ENCODE measurements at regions of chr2 and their contacts with region 1.

Region 1: GRCh38 chr2:85327822-85328617 is at the start of gene TGOLN2:
- DNase-seq: peak; percentile 93 to 96 (median 95)
- H3K4me3 ChIP-seq: peak within 1 kb of the TSS; percentile 99 to 100
- H3K4me3 Mint-ChIP-seq: peak within 1 kb of the TSS; percentile 92 to 100 (median 98)
- H3K27ac ChIP-seq: peak within 1 kb of the TSS; percentile 98
- H3K27ac Mint-ChIP-seq: peak within 1 kb of the TSS; percentile 97 to 100 (median 100)
- H3K4me1 ChIP-seq: peaks cover 44% of the 10 kb centered on the region
- H3K4me1 Mint-ChIP-seq: peaks cover 21 to 65% (median 34%) of the 10 kb centered on the region in 4 donors
- H3K27me3 ChIP-seq: no peaks in the 10 kb centered on the region
- H3K27me3 Mint-ChIP-seq: no peaks in the 10 kb centered on the region
- total RNA-seq, gene TGOLN2: 188 to 195 TPM

Region 2: DNA sequence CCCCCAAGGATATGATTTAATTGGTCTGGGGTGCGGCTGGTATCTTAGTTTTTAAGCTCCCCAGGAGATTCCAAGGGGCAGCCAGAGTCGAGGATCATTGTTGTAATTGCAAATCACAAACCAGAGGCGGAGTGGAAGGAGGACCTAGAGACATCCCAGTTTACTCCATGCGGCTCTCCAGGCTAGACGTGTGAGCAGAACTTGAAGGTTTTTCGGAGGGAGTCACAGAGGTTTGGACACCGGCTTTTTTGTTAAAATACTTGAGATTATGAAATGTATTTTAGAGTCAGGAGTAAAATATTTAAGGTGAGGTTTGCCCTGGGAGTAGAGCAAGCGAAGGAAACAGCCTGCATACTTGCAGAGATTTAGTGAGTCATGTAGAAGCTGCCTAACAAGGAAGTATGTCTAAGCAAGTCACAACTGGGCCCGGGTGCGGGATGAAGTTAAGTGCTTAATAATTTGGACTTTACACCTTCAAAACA is 39.7 kb before region 1 on chr2:
- CTCF ChIA-PET with region 1: interaction called, 4 read pairs
- POLR2A ChIA-PET with region 1: interaction called, 32 read pairs
- intact Hi-C with region 1: no loop called
- DNase-seq: no peak
- H3K4me3 ChIP-seq: no peak overlapping the region
- H3K4me3 Mint-ChIP-seq: no peak overlapping the region
- H3K27ac ChIP-seq: no peak overlapping the region
- H3K27ac Mint-ChIP-seq: no peak overlapping the region
- H3K4me1 ChIP-seq: peaks cover 10% of the 10 kb centered on the region
- H3K4me1 Mint-ChIP-seq: peaks cover 16 to 28% (median 23%) of the 10 kb centered on the region in 4 donors
- H3K27me3 ChIP-seq: no peaks in the 10 kb centered on the region
- H3K27me3 Mint-ChIP-seq: no peaks in the 10 kb centered on the region

Region 3: DNA sequence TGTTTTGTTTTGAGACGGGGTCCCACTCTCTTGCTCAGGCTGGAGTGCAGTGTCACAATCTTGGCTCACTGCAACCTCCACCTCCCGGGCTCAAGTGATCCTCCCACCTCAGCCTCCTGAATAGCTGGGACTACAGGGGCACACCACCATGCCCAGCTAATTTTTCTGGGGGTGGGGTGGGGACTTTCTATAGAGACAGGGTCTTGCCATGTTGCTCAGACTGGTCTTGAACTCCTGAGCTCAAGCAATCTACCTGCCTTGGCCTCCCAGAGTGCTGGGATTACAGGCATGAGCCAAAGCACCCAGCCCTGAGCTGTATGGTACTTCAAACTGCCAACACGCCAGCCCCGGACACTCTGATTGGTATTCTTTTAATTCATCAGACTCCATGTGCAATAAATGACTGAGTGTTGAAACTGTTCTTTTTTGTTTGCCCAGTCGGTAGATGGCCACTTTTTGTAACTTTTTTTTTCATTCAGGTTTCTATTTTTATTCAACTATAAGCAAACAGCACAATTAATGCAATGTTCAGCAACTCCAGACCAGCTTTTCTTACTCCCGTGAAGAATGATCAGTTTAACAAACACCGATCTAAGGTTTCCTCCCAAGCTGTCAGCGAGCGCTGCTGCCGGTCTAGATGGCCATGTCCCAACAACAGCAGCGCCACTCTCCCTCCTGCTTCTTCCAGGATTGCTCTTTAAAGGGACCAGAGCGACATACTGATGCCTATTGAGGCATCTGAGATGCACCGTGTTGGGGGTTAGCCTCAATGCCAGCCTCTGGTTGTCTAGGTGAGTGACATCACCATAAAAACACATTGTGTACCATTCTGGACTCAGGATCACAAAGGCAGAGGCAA is 12.2 kb after region 1 on chr2:
- CTCF ChIA-PET with region 1: interaction called, 3 read pairs
- POLR2A ChIA-PET with region 1: interaction called, 12 read pairs
- intact Hi-C with region 1: no loop called
- DNase-seq: no peak
- H3K4me3 ChIP-seq: no peak overlapping the region
- H3K4me3 Mint-ChIP-seq: no peak overlapping the region
- H3K27ac ChIP-seq: no peak overlapping the region
- H3K27ac Mint-ChIP-seq: no peak overlapping the region
- H3K4me1 ChIP-seq: no peaks in the 10 kb centered on the region
- H3K4me1 Mint-ChIP-seq: peaks cover 0 to 1% (median 0%) of the 10 kb centered on the region in 4 donors
- H3K27me3 ChIP-seq: no peaks in the 10 kb centered on the region
- H3K27me3 Mint-ChIP-seq: no peaks in the 10 kb centered on the region

Region 4: DNA sequence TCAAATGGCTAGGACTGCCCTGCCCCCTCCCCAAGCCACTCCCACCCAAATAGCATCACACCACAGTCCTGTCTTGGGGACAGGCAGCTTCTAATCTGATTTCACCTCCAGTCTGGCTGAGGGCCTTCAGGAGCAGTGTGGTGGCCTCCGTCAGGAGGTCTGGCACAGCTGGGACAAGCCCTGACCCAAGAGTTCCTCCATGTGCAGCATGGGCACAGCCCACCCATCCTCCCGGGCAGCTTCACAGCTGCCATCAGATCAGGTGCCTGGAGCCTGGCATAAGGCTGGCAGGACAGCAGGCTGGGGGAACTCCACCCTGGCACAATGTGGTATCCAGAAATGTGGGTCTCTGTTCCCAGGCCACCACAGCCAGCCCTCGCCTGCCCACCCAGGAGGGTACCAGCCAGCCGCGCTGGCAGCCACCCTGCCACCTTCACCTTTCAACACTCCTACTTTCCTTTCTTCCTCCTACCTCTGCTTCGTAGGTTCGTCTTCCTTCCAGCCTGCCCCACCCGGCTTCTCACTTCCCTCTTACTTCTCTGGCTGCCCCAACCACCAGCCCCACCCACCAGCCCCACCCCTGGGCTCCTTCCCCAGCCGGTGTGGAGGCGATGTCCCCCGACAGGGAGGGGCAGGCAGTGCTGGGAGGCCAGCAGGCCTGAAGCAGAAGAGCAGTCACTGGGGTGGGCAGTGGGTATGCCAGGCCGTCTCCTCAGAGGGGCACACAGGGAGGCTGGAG is 82.0 kb after region 1 on chr2 and contains the start of gene CAPG:
- CTCF ChIA-PET with region 1: no interaction called
- POLR2A ChIA-PET with region 1: interaction called, 13 read pairs
- intact Hi-C with region 1: no loop called
- DNase-seq: peak in 2 of 5 donors; percentile 25 to 34
- H3K4me3 ChIP-seq: peak within 1 kb of the TSS; percentile 47 to 58
- H3K4me3 Mint-ChIP-seq: peak within 1 kb of the TSS; percentile 86 to 90 (median 88)
- H3K27ac ChIP-seq: peak within 1 kb of the TSS; percentile 55
- H3K27ac Mint-ChIP-seq: peak within 1 kb of the TSS; percentile 54 to 92 (median 85)
- H3K4me1 ChIP-seq: peaks cover 62% of the 10 kb centered on the region
- H3K4me1 Mint-ChIP-seq: peaks cover 36 to 52% (median 44%) of the 10 kb centered on the region in 4 donors
- H3K27me3 ChIP-seq: no peaks in the 10 kb centered on the region
- H3K27me3 Mint-ChIP-seq: no peaks in the 10 kb centered on the region
- total RNA-seq, gene CAPG: 25.6 to 38.5 TPM

Region 5: DNA sequence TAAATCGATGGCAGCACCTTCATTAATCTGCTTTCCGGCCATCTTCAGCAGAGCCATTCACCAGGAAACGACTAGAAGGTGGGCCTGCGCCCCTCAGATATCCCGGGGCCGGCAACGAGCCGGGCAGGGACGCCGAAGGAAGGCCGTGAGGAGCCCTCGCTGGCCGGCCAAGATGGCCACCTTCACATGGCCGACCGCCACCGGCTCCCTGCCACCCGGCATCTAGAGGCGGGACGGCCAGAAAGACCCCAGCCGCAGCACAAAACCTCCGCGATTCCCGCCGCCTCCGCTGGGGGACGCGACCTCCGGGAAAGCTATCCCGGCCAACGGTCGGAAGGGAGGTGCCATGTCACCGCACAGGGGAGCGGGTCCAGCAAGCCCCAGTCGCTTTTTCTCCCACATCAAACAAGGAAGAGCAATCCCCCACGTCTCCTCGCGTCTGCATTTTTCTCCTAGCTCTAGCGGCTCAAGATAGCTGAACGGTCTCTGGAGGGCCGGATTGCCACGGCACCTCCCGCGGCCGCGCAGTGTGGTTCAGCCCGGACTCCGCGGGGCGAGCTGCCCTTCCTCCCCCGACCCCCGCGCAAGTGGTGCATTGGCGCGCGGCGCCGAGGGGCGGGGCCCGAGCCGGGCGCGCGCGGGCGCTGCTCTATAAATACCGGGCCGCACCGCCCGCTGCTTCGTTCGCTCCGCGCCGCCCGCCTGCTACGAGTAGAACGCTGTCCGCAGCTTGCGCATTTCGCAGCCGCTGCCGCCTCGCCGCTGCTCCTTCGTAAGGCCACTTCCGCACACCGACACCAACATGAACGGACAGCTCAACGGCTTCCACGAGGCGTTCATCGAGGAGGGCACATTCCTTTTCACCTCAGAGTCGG is 210.7 kb after region 1 on chr2 and contains the start of gene MAT2A:
- CTCF ChIA-PET with region 1: no interaction called
- POLR2A ChIA-PET with region 1: interaction called, 64 read pairs
- intact Hi-C with region 1: loop called (anchors 1 kb)
- DNase-seq: peak; percentile 78 to 91 (median 86)
- H3K4me3 ChIP-seq: peak within 1 kb of the TSS; percentile 78 to 98
- H3K4me3 Mint-ChIP-seq: peak within 1 kb of the TSS; percentile 93 to 97 (median 95)
- H3K27ac ChIP-seq: peak within 1 kb of the TSS; percentile 83
- H3K27ac Mint-ChIP-seq: peak within 1 kb of the TSS; percentile 94 to 97 (median 95)
- H3K4me1 ChIP-seq: peaks cover 44% of the 10 kb centered on the region
- H3K4me1 Mint-ChIP-seq: peaks cover 33 to 58% (median 43%) of the 10 kb centered on the region in 4 donors
- H3K27me3 ChIP-seq: no peaks in the 10 kb centered on the region
- H3K27me3 Mint-ChIP-seq: no peaks in the 10 kb centered on the region
- total RNA-seq, gene MAT2A: 177 to 182 TPM

Region 6: GRCh38 chr2:85595301-85596025 is 267.4 kb after region 1 on chr2 and contains the start of gene RNF181:
- CTCF ChIA-PET with region 1: no interaction called
- POLR2A ChIA-PET with region 1: interaction called, 24 read pairs
- intact Hi-C with region 1: no loop called
- DNase-seq: peak; percentile 88 to 97 (median 91)
- H3K4me3 ChIP-seq: peak within 1 kb of the TSS; percentile 49 to 96
- H3K4me3 Mint-ChIP-seq: peak within 1 kb of the TSS; percentile 96 to 99 (median 98)
- H3K27ac ChIP-seq: peak within 1 kb of the TSS; percentile 86
- H3K27ac Mint-ChIP-seq: peak within 1 kb of the TSS; percentile 95 to 99 (median 97)
- H3K4me1 ChIP-seq: peaks cover 26% of the 10 kb centered on the region
- H3K4me1 Mint-ChIP-seq: peaks cover 25 to 42% (median 32%) of the 10 kb centered on the region in 4 donors
- H3K27me3 ChIP-seq: no peaks in the 10 kb centered on the region
- H3K27me3 Mint-ChIP-seq: no peaks in the 10 kb centered on the region
- total RNA-seq, gene RNF181: 73.6 to 77.1 TPM

Measured in CD4-positive, alpha-beta memory T cell (primary cell).